SK-N-SH (cell line): ENCODE measurements at regions of chr11 and their contacts with region 1.

Region 1: GRCh38 chr11:62108017-62108750 is 15.6 kb upstream of the INCENP start:
- DNase-seq: peak; percentile 69
- H3K4me3 ChIP-seq: no peak overlapping the region; a peak in 1 of 4 replicates
- H3K27ac ChIP-seq: no peak overlapping the region
- H3K4me1 ChIP-seq: peaks cover 0 to 3% of the 10 kb centered on the region in 2 experiments; a peak in 1 of 4 replicates
- H3K27me3 ChIP-seq: no peaks in the 10 kb centered on the region
- CTCF ChIP-seq: peak; percentile 87
- EP300 ChIP-seq: no peak
- RAD21 ChIP-seq: peak; percentile 92

Region 2: DNA sequence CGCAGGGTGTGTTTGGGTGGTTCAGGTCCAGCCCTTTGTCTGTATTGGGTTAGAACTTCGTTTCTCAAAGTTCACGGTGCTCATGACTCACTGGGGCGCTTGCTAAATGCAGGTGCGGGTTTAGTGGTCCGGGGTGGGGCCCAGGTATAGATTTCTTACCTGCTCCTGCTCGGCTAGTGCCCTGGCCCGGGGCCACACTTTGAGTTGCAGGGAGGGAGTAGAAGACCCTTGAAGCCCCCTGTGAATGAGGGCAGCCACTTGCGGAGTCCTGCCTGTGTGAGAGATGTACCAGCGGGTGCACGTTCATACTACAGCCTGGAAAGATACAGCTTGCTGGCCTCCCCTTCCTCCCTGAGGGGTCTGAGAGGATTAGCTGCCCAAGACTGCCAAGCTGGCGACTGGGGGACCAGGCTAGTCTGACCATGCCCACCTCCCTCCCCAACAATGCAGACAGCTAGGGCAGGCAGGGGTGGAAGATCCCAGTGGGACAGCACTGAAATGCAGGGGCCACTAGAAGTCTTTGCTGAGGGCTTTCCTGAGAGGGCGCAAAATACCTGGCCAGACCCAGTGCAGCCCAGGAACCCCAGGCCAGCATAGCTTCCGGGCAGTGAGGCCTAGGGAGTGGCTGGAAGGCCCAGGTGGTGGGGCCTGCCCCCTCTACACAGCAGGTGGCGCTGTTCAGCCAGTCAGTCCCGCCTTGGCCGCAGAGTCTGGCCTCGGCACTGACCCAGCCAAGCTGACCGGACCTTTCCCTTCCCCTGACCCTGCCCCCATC is 360.8 kb before region 1 on chr11:
- CTCF ChIA-PET with region 1: interaction called, 50 read pairs
- POLR2A ChIA-PET with region 1: interaction called, 4 read pairs
- DNase-seq: peak; percentile 95
- H3K4me3 ChIP-seq: no peak overlapping the region; a peak in 1 of 4 replicates
- H3K27ac ChIP-seq: no peak overlapping the region; a peak in 1 of 4 replicates
- H3K4me1 ChIP-seq: peaks cover 0 to 11% of the 10 kb centered on the region in 2 experiments; a peak in 1 of 4 replicates
- H3K27me3 ChIP-seq: no peaks in the 10 kb centered on the region
- CTCF ChIP-seq: peak; percentile 87
- EP300 ChIP-seq: no peak
- RAD21 ChIP-seq: peak; percentile 79

Region 3: GRCh38 chr11:61816736-61817455 is 291.3 kb before region 1 on chr11 and contains the start of gene FADS1:
- CTCF ChIA-PET with region 1: interaction called, 18 read pairs
- POLR2A ChIA-PET with region 1: no interaction called
- DNase-seq: peak; percentile 95
- H3K4me3 ChIP-seq: peak within 1 kb of the TSS; percentile 83 to 87
- H3K27ac ChIP-seq: peak within 1 kb of the TSS; percentile 88 to 98
- H3K4me1 ChIP-seq: peaks cover 17 to 19% of the 10 kb centered on the region in 2 experiments; a peak in 3 of 4 replicates
- H3K27me3 ChIP-seq: no peaks in the 10 kb centered on the region
- CTCF ChIP-seq: peak; percentile 63
- EP300 ChIP-seq: no peak
- RAD21 ChIP-seq: peak; percentile 36
- polyA plus RNA-seq, gene FADS1: 20.6 and 26.4 TPM in 2 replicates

Region 4: GRCh38 chr11:61885166-61885778 is 222.9 kb before region 1 on chr11:
- CTCF ChIA-PET with region 1: interaction called, 10 read pairs
- POLR2A ChIA-PET with region 1: no interaction called
- DNase-seq: no peak
- H3K4me3 ChIP-seq: no peak overlapping the region
- H3K27ac ChIP-seq: no peak overlapping the region
- H3K4me1 ChIP-seq: peaks cover 7 to 11% of the 10 kb centered on the region in 2 experiments; a peak in 3 of 4 replicates
- H3K27me3 ChIP-seq: no peaks in the 10 kb centered on the region
- CTCF ChIP-seq: no peak
- EP300 ChIP-seq: no peak
- RAD21 ChIP-seq: no peak

Region 5: DNA sequence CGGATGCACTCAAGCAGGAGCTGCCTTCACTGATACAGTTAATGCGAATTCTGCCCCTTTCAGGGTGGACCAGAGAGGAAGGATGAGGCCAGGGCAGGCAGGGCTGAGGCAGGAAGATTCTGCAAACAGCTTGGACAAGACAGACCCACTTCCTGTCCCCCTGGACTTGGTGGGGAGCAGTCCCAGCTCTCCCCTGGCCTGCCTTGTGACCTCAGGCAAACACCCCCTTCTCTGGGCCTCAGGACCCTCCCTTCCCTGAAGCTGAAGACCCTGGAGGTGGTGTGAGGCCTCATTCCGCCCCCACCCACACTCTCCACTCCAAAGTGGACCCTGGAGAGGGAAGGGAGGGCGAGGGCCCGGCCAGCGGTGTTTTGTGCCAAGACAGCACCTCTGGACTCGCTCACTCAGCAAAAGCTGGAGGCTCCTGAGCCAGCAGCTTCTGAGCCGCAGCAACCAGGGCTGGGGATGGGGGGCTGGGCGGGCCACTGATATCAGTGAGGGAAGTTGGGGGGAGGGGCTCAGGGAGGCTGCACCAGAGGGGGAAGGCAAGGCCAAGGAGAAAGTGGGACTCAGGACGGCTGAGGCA is 199.4 kb before region 1 on chr11:
- CTCF ChIA-PET with region 1: interaction called, 147 read pairs
- POLR2A ChIA-PET with region 1: no interaction called
- DNase-seq: no peak
- H3K4me3 ChIP-seq: no peak overlapping the region
- H3K27ac ChIP-seq: no peak overlapping the region
- H3K4me1 ChIP-seq: no peaks in the 10 kb centered on the region
- H3K27me3 ChIP-seq: no peaks in the 10 kb centered on the region
- CTCF ChIP-seq: no peak
- EP300 ChIP-seq: no peak
- RAD21 ChIP-seq: no peak

Region 6: DNA sequence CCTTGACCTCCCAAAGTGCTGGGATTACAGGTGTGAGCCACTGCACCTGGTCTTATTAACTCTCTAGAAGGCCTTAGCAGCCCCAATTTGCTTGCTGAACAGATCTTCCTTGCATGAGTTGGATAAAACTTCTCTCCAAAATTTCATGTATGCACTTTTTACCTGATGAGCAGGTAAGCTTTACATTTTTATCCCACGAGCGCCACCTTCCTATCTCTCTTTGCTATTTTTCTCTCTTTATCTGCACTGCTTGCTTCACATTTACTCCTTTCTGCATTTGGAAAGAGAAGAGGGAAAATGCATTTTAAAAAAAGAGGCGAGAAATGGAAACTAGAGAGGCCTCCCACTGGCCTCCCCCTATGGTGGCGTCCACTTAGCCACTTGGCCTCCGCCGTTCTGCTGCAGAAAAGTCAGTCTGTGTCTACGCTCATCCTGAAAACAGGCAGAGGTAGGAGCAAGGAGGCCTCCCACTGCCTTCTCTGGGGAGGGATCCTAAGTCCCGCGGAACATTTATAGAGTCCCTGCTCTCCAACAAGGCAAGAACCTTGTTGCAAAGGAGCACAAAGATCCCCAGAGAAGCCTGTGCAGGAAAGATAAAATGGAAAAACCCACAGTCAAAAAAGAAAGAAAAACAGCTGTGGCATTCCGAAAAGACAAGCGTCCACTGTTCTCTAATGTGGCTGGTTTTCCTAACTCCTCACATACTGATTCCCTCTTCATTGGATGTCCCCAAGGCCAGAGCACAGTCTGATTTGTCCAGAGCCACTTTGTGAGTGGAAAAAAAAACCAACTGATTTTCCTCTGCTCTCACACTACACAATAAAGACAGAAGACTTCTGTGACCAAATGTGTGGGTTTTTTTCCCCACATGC is 46.6 kb before region 1 on chr11:
- CTCF ChIA-PET with region 1: interaction called, 13 read pairs
- POLR2A ChIA-PET with region 1: no interaction called
- DNase-seq: no peak
- H3K4me3 ChIP-seq: no peak overlapping the region
- H3K27ac ChIP-seq: no peak overlapping the region
- H3K4me1 ChIP-seq: no peaks in the 10 kb centered on the region
- H3K27me3 ChIP-seq: no peaks in the 10 kb centered on the region
- CTCF ChIP-seq: no peak
- EP300 ChIP-seq: no peak
- RAD21 ChIP-seq: no peak

Region 7: DNA sequence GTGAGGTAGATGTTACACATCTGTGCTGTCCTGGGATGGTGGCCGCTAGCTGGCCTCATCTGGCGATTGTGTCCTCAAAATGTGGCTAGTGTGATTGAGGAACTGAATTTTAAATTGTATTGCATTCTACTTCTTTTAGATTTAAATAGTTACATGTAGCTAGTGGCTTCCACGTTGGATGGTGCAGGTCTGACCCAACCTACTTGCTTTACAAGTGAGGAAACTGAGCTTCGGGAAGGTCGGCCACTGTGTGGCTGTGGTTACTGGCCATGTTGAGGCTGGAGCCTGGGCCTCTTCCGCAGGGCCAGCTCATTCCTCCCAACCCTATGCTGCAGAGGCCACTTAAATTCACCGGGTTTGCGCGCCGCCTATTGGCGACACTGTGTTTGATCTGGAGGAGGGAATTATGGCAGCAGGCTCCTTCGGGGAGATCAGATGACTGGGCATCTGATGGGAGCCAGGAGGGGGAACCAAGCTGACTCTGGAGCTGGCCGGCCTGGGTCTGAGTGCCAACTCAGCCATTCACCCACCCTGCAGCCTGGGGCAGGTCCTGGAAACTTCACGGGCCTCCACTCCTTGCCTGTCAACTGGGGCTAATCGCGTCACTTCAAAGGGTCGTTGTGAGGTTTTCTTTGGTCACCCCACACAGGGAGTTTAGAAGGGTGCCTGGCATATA is 22.6 kb after region 1 on chr11:
- CTCF ChIA-PET with region 1: interaction called, 19 read pairs
- POLR2A ChIA-PET with region 1: no interaction called
- DNase-seq: peak; percentile 6
- H3K4me3 ChIP-seq: no peak overlapping the region
- H3K27ac ChIP-seq: no peak overlapping the region
- H3K4me1 ChIP-seq: peaks cover 1 to 2% of the 10 kb centered on the region in 2 experiments; a peak in 1 of 4 replicates
- H3K27me3 ChIP-seq: no peaks in the 10 kb centered on the region
- CTCF ChIP-seq: no peak
- EP300 ChIP-seq: no peak
- RAD21 ChIP-seq: no peak

Region 8: GRCh38 chr11:62186195-62186594 is 78.0 kb after region 1 on chr11:
- CTCF ChIA-PET with region 1: no interaction called
- POLR2A ChIA-PET with region 1: no interaction called
- DNase-seq: no peak
- H3K4me3 ChIP-seq: no peak overlapping the region
- H3K27ac ChIP-seq: no peak overlapping the region
- H3K4me1 ChIP-seq: no peaks in the 10 kb centered on the region; a peak in 1 of 4 replicates
- H3K27me3 ChIP-seq: peaks cover 26% of the 10 kb centered on the region
- CTCF ChIP-seq: no peak
- EP300 ChIP-seq: no peak
- RAD21 ChIP-seq: no peak